Psoas muscle (tissue), 8 donors: ENCODE measurements at regions of chr1 and their contacts with region 1.

Region 1: GRCh38 chr1:23273450-23274133 is 56.3 kb upstream of the HTR1D start:
- DNase-seq: no peak
- ATAC-seq: no peak
- H3K4me3 ChIP-seq: no peak overlapping the region
- H3K27ac ChIP-seq: no peak overlapping the region
- H3K4me1 ChIP-seq: no peaks in the 10 kb centered on the region
- H3K27me3 ChIP-seq: peaks cover 0 to 49% (median 2%) of the 10 kb centered on the region in 3 donors
- CTCF ChIP-seq: no peak

Region 2: DNA sequence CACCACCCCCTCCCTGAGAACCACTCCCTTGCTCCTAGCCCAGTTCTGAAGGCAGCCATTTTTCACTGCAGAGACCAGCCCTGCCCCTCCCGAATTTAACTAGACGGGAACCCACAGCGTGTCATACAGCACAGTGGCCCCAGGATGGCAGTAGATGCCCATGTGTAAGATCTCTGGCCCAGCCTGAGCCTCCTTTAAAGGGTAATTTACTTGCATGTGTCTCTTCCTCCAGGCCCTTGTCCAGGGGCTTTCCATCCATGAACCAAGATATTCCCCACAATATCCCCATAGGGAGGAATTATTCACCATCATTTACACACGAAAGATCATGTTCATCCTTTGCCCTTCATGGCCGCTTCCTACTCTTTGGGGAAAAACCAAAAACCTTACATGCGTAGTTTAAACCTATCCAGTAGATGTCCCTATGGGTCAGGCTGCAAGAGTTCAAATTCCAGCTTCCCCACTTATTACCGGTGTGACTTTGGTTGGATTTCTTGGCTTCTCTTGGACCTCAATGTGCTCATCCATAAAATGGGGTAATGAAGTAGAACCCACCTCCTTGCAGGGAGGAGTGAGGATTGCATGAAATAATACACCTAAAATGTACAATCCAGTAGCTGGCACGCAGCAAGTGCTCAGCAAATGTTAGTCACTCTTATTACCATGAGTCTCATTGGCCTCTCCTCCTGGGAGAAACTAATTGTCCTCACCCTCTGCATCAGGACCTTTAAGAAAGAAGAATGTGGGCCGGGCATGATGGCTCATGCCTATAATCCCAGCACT is 296.9 kb before region 1 on chr1:
- intact Hi-C with region 1: loop called in 1 of 2 experiments (anchors 10 kb)
- DNase-seq: peak in 1 of 2 donors; percentile 36
- ATAC-seq: peak; percentile 84 to 92 (median 86)
- H3K4me3 ChIP-seq: no peak overlapping the region
- H3K27ac ChIP-seq: no peak overlapping the region
- H3K4me1 ChIP-seq: no peaks in the 10 kb centered on the region
- H3K27me3 ChIP-seq: peaks cover 0 to 30% (median 4%) of the 10 kb centered on the region in 3 donors
- CTCF ChIP-seq: peak; percentile 64

Region 3: GRCh38 chr1:23184212-23184934 is 89.2 kb before region 1 on chr1:
- intact Hi-C with region 1: no loop called
- DNase-seq: no peak
- ATAC-seq: peak in 2 of 4 donors; percentile 31 to 66
- H3K4me3 ChIP-seq: peak overlapping the region; percentile 55
- H3K27ac ChIP-seq: no peak overlapping the region
- H3K4me1 ChIP-seq: no peaks in the 10 kb centered on the region
- H3K27me3 ChIP-seq: peaks cover 0 to 7% (median 0%) of the 10 kb centered on the region in 3 donors
- CTCF ChIP-seq: peak; percentile 87

Region 4: GRCh38 chr1:23216771-23217420 is 56.7 kb before region 1 on chr1:
- intact Hi-C with region 1: loop called in 1 of 2 experiments (anchors 5 kb)
- DNase-seq: peak in 1 of 2 donors; percentile 19
- ATAC-seq: peak in 1 of 4 donors; percentile 46
- H3K4me3 ChIP-seq: peak overlapping the region; percentile 60
- H3K27ac ChIP-seq: no peak overlapping the region
- H3K4me1 ChIP-seq: no peaks in the 10 kb centered on the region
- H3K27me3 ChIP-seq: peaks cover 2 to 68% (median 13%) of the 10 kb centered on the region in 3 donors
- CTCF ChIP-seq: peak; percentile 53